BJ (cell line): ENCODE measurements at regions of chr7 and their contacts with region 1.

Region 1: DNA sequence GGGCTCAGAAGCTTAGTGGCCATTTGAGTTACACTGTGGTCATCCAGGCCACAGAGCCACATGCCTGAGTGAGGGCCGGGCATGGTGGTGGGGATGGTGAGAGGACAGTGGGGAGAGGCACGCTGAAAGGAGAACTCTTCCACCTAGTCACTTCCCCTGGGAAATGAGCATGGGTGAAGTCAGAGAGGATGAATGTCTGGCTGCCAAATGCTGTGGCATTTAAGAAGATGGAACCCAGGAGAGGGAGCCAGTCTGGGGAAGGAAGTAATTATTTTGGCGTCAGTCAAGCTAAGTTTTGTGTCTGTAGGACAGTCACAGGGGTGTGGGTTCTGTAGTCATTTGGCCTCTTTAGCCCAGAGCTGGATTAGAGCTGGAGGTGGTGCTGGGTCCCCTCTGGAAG is 86.0 kb upstream of the PODXL start:
- DNase-seq: no peak
- H3K4me3 ChIP-seq: no peak overlapping the region
- H3K27me3 ChIP-seq: no peaks in the 10 kb centered on the region
- CTCF ChIP-seq: no peak

Region 2: GRCh38 chr7:131556052-131556908 is 86.1 kb before region 1 on chr7 and contains the start of gene PODXL:
- CTCF ChIA-PET with region 1: no interaction called
- POLR2A ChIA-PET with region 1: interaction called, 22 read pairs
- DNase-seq: no peak
- H3K4me3 ChIP-seq: peak within 1 kb of the TSS; percentile 44
- H3K27me3 ChIP-seq: peaks cover 21% of the 10 kb centered on the region
- CTCF ChIP-seq: no peak
- polyA plus RNA-seq, gene PODXL: 0.34 and 0.53 TPM in 2 replicates